OCI-LY7 (cell line): ENCODE measurements at regions of chr22 and their contacts with region 1.

Region 1: GRCh38 chr22:22043296-22044078 is 60.9 kb upstream of the TOP3B start:
- DNase-seq: peak; percentile 81
- H3K4me3 ChIP-seq: peak overlapping the region; percentile 70
- H3K27ac ChIP-seq: peak overlapping the region; percentile 84
- H3K4me1 ChIP-seq: peaks cover 96% of the 10 kb centered on the region
- CTCF ChIP-seq: peak; percentile 70

Region 2: DNA sequence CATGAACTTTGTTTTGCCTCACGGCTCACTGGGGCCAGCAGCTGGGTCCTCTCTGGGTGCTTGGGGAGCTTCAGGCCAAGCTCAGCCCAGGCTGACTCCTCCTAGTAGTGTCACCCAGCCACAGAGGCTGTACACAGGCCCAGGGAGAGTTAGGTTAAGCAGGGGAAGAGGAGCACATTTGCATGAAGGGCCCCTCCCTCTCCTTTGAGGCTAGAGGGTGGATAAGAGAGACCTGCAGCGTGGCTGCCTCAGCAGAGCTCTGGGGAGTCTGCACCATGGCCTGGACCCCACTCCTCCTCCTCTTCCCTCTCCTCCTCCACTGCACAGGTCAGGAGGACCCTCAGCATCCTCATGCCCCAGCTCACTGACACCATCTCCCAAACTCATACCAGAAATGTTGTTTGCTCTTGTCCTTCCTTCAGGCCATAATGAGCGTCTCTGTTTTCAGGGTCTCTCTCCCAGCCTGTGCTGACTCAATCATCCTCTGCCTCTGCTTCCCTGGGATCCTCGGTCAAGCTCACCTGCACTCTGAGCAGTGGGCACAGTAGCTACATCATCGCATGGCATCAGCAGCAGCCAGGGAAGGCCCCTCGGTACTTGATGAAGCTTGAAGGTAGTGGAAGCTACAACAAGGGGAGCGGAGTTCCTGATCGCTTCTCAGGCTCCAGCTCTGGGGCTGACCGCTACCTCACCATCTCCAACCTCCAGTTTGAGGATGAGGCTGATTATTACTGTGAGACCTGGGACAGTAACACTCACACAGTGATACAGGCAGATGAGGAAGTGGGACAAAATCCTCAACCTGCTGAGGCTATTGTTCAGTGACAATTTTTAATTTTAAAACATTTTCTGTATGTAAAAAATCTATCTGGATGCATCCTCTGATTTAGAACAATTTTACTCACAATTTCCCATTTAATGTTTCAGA is 118.7 kb after region 1 on chr22:
- CTCF ChIA-PET with region 1: interaction called, 5 read pairs
- POLR2A ChIA-PET with region 1: interaction called, 26 read pairs
- intact Hi-C with region 1: loop called (anchors 2 kb)
- DNase-seq: peak; percentile 95
- H3K4me3 ChIP-seq: peak overlapping the region; percentile 66
- H3K27ac ChIP-seq: peak overlapping the region; percentile 99
- H3K4me1 ChIP-seq: peaks cover 84% of the 10 kb centered on the region
- CTCF ChIP-seq: no peak